K562 (cell line): ENCODE measurements at regions of chr10 and their contacts with region 1.

Region 1: GRCh38 chr10:6920072-6921019 is 340.3 kb upstream of the PRKCQ start:
- DNase-seq: peak; percentile 87 to 92 (median 88)
- ATAC-seq: peak; percentile 95
- H3K4me3 ChIP-seq: peak overlapping the region; percentile 5; the same call in 1 of the 2 replicates
- H3K27ac ChIP-seq: peak overlapping the region; percentile 75
- H3K4me1 ChIP-seq: peaks cover 2 to 17% of the 10 kb centered on the region in 2 experiments; a peak in 4 of 5 replicates
- H3K27me3 ChIP-seq: no peaks in the 10 kb centered on the region; a peak in 1 of 5 replicates
- CTCF ChIP-seq: peak; percentile 79 to 92 (median 84)
- EP300 ChIP-seq: peak; percentile 99
- POLR2A ChIP-seq: no peak
- RAD21 ChIP-seq: peak; percentile 86 to 88

Region 2: DNA sequence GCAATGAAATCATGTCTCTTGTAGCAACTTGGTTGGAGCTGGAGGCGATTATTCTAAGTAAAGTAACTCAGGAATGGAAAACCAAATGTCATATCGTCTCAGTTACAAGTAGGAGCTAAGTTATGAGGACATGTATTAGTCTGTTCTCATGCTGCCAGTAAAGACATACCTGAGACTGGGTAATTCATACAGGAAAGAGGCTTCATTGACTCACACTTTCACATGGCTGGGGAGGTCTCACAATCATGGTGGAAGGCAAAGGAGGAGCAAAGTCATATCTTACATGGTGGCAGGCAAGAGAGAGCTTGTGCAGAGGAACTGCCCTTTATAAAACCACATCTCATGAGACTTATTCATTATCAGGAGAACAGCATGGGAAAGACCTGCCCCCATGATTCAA is 29.8 kb after region 1 on chr10:
- CTCF ChIA-PET with region 1: no interaction called
- POLR2A ChIA-PET with region 1: no interaction called
- in situ Hi-C with region 1: no loop called
- intact Hi-C with region 1: no loop called
- DNase-seq: no peak
- ATAC-seq: no peak
- H3K4me3 ChIP-seq: no peak overlapping the region
- H3K27ac ChIP-seq: no peak overlapping the region
- H3K4me1 ChIP-seq: 0 out of 5 replicates have a peak, but pooled peaks cover 0 to 2% of the 10 kb centered on the region in 2 experiments
- H3K27me3 ChIP-seq: no peaks in the 10 kb centered on the region
- CTCF ChIP-seq: no peak
- EP300 ChIP-seq: no peak
- POLR2A ChIP-seq: no peak
- RAD21 ChIP-seq: no peak

Region 3: GRCh38 chr10:7027913-7028808 is 107.8 kb after region 1 on chr10:
- CTCF ChIA-PET with region 1: no interaction called
- POLR2A ChIA-PET with region 1: no interaction called
- in situ Hi-C with region 1: no loop called
- intact Hi-C with region 1: loop called (anchors 1 kb)
- DNase-seq: peak; percentile 79 to 92 (median 84)
- ATAC-seq: peak; percentile 98
- H3K4me3 ChIP-seq: no peak overlapping the region
- H3K27ac ChIP-seq: peak overlapping the region; percentile 98
- H3K4me1 ChIP-seq: peaks cover 2 to 33% of the 10 kb centered on the region in 2 experiments; a peak in 4 of 5 replicates
- H3K27me3 ChIP-seq: no peaks in the 10 kb centered on the region
- CTCF ChIP-seq: peak in 1 of 3 experiments; percentile 9; a peak in 1 of 6 replicates
- EP300 ChIP-seq: peak; percentile 97
- POLR2A ChIP-seq: peak; percentile 57; the same call in 1 of the 2 replicates
- RAD21 ChIP-seq: peak in 1 of 2 experiments; percentile 27; a peak in 2 of 4 replicates

Region 4: DNA sequence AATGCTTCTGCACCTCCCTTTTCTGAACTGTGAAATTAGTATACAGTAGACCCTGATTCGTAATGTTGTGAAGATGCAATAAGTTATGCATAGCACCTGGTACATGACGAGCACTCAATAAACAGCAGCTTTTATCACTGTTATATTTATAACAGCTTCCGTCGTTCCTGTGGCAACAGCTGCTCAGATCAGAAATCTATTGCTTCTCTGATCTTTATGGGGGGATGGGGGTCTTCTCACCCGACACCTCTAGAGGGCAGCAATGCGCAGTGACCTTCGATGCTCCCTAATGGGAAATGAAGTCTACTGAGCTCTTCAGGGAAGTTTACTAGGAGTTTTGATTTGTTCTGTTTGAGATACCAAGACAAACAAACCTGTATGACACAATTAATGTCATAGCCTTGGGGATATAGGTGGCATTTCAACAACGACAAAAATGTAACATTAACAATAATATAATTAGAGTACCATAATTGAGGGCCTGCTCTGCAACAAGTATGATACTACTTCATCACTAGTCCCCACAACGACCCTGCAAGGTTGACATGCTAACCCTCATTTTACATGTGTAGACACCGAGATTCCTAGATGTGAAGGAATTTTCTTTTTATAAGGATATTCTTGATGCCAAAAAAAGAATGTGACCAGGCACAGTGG is 200.9 kb after region 1 on chr10:
- CTCF ChIA-PET with region 1: no interaction called
- POLR2A ChIA-PET with region 1: no interaction called
- in situ Hi-C with region 1: no loop called
- intact Hi-C with region 1: loop called (anchors 1 kb)
- DNase-seq: peak; percentile 75 to 79 (median 76)
- ATAC-seq: peak; percentile 88
- H3K4me3 ChIP-seq: no peak overlapping the region
- H3K27ac ChIP-seq: no peak overlapping the region
- H3K4me1 ChIP-seq: peaks cover 0 to 13% of the 10 kb centered on the region in 2 experiments; a peak in 2 of 5 replicates
- H3K27me3 ChIP-seq: no peaks in the 10 kb centered on the region
- CTCF ChIP-seq: peak; percentile 70 to 76 (median 74)
- EP300 ChIP-seq: no peak
- POLR2A ChIP-seq: no peak
- RAD21 ChIP-seq: peak; percentile 37 to 68

Region 5: GRCh38 chr10:7184660-7185366 is 264.5 kb after region 1 on chr10:
- CTCF ChIA-PET with region 1: no interaction called
- POLR2A ChIA-PET with region 1: no interaction called
- in situ Hi-C with region 1: no loop called
- intact Hi-C with region 1: loop called (anchors 5 kb)
- DNase-seq: no peak
- ATAC-seq: no peak
- H3K4me3 ChIP-seq: no peak overlapping the region
- H3K27ac ChIP-seq: no peak overlapping the region
- H3K4me1 ChIP-seq: peaks cover 9 to 12% of the 10 kb centered on the region in 2 experiments; a peak in 4 of 5 replicates
- H3K27me3 ChIP-seq: no peaks in the 10 kb centered on the region
- CTCF ChIP-seq: no peak
- EP300 ChIP-seq: no peak
- POLR2A ChIP-seq: no peak
- RAD21 ChIP-seq: no peak

Region 6: GRCh38 chr10:7239312-7239985 is 319.1 kb after region 1 on chr10:
- CTCF ChIA-PET with region 1: no interaction called
- POLR2A ChIA-PET with region 1: no interaction called
- in situ Hi-C with region 1: no loop called
- intact Hi-C with region 1: loop called (anchors 10 kb)
- DNase-seq: no peak
- ATAC-seq: no peak
- H3K4me3 ChIP-seq: no peak overlapping the region
- H3K27ac ChIP-seq: no peak overlapping the region
- H3K4me1 ChIP-seq: peaks cover 3 to 7% of the 10 kb centered on the region in 2 experiments; a peak in 4 of 5 replicates
- H3K27me3 ChIP-seq: no peaks in the 10 kb centered on the region
- CTCF ChIP-seq: no peak
- EP300 ChIP-seq: no peak
- POLR2A ChIP-seq: no peak
- RAD21 ChIP-seq: no peak

Region 7: GRCh38 chr10:7417103-7417623 is 496.8 kb after region 1 on chr10:
- CTCF ChIA-PET with region 1: interaction called, 4 read pairs
- POLR2A ChIA-PET with region 1: no interaction called
- in situ Hi-C with region 1: no loop called
- intact Hi-C with region 1: loop called (anchors 2 kb)
- DNase-seq: peak in 1 of 4 experiments; percentile 39
- ATAC-seq: no peak
- H3K4me3 ChIP-seq: no peak overlapping the region
- H3K27ac ChIP-seq: no peak overlapping the region
- H3K4me1 ChIP-seq: no peaks in the 10 kb centered on the region
- H3K27me3 ChIP-seq: peaks cover 7% of the 10 kb centered on the region in 2 experiments; a peak in 3 of 5 replicates
- CTCF ChIP-seq: peak in 2 of 3 experiments; percentile 27 to 72; a peak in 4 of 6 replicates
- EP300 ChIP-seq: no peak
- POLR2A ChIP-seq: no peak
- RAD21 ChIP-seq: peak; percentile 82 to 84